ENCODE measurements at regions of chr5 and their contacts with region 1.

Region 1: DNA sequence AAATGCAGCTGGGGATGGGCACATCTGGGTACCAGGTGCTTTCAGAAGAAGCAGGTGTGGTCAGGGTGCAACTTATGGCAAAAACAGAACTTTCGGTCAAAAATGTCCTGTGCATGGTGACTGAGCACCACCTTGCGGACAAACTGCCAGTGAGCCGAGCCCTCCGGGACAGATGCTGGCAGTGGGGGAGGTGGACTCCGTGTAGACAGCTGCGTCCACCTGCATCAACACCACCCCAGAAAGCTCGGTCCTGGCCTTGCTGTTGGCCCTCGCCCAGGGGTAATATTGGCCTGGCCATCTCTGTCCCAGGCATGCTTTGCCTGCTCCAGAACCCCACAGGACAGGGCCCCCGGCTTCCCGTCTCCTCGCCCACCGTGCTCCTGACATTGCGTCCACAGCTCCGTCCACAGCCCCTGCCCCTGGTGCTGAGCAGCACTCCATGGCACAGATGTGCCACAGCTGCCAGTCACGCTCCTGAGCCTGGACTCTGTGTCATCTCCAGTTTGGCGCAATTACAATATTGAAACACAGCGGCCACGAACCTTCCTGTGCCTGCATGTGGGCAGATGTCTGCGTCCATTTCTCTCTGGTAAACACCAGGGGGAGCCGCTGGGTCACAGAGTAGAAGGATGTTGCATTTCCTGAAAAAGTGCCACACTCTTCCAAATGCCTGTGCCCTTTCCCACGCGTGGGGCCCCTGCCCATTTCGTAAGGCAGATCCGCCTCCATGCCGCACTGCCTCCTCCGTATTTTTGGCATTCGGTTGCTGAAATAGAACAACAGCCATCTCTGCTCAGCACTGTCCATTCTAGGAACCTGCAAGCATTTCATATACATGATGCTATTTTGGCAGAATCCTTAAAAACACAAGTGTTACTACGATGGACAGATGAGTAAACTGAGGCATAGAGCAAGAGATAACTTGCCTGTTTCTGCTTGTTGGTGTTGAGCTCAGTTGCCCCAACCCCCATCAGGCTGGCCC is 33.4 kb upstream of the SLC6A19 start:
- DNase-seq: peak; percentile 56
- H3K4me3 ChIP-seq: no peak overlapping the region
- H3K27ac ChIP-seq: no peak overlapping the region
- H3K4me1 ChIP-seq: no peaks in the 10 kb centered on the region
- H3K27me3 ChIP-seq: no peaks in the 10 kb centered on the region
- CTCF ChIP-seq: peak; percentile 66 to 80

Region 2: DNA sequence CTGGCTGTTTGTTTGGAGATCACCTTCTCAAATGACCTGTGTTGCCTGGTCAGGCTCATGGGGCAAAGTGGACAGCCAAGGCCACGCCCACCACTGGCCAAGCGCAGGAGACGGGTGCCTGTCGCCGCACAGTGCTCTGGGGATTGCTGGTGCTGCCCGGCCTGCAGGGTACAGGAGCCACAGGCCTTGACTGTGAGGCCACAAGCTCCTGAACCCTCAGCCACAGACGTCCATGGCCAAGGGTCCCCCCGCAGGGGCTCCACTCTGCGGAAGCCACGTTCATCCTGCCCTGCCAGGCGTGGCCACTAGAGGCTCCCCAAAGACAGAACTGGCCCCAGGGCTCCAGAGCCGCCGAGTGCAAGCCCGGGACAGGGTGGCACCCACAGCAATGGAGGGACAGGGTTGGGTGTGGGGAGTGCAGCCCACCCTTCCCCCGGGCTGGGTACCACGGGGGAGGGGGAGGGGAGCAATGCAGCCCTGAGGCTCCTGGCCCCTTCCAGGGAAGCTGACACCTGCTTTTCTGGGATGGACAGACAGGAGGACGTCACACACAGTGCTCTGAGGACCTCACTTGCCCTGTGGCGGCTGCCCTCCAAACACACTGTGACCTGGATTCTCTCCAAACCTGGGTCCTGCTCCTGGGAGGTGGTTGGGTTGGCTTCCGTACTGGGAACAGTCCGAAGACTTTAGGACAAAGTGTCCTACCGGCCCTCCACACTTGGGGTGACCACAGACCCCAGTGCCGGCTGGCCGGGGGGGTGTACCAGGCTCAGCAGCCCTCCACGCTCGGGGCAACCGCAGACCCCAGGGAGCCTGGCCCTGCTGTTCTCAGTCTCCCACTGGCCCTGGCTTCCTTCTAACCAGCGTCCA is 496.3 kb before region 1 on chr5:
- CTCF ChIA-PET with region 1: no interaction called
- dilution Hi-C with region 1: no loop called
- in situ Hi-C with region 1: no loop called
- intact Hi-C with region 1: loop called (anchors 5 kb)
- DNase-seq: peak; percentile 36
- H3K4me3 ChIP-seq: no peak overlapping the region
- H3K27ac ChIP-seq: peak overlapping the region; percentile 20
- H3K4me1 ChIP-seq: peaks cover 26% of the 10 kb centered on the region
- H3K27me3 ChIP-seq: peaks cover 4% of the 10 kb centered on the region
- CTCF ChIP-seq: peak; percentile 69 to 97

Region 3: GRCh38 chr5:873328-873727 is 294.7 kb before region 1 on chr5:
- CTCF ChIA-PET with region 1: no interaction called
- dilution Hi-C with region 1: no loop called
- in situ Hi-C with region 1: no loop called
- intact Hi-C with region 1: no loop called
- DNase-seq: no peak
- H3K4me3 ChIP-seq: no peak overlapping the region
- H3K27ac ChIP-seq: no peak overlapping the region
- H3K4me1 ChIP-seq: no peaks in the 10 kb centered on the region
- H3K27me3 ChIP-seq: no peaks in the 10 kb centered on the region
- CTCF ChIP-seq: no peak

Region 4: DNA sequence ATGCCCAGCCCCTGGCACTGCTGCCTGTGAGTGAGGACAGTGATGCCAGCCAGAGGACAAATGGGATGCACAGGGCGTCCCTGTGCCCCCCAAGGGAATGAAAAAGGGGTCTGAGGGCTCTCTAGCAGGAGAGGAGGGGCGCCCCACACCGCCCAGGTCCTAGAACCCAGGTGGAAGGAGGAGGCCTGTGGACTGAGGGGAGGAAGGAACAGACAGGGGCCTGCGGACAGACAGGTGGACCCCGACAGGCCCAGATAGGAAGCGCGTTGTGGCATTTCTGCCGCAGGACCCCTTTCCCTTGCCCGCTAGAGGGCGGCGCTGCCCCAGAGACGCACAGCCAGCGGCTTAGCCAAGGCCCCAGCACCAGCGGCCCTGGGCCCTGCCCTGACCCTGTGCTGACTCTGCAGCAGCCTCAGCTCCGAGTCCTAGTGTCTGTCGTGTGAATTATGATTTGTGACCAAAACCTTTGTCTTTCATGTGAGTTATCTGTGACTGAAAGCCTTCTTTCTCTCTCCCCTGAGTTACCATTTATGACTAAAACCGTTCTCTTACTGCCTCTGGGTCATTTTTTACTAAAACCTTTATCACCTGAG is 244.6 kb before region 1 on chr5:
- CTCF ChIA-PET with region 1: no interaction called
- dilution Hi-C with region 1: no loop called
- in situ Hi-C with region 1: loop called in 1 of 2 experiments (anchors 10 kb)
- intact Hi-C with region 1: loop called (anchors 2 kb)
- DNase-seq: peak; percentile 43
- H3K4me3 ChIP-seq: no peak overlapping the region
- H3K27ac ChIP-seq: no peak overlapping the region
- H3K4me1 ChIP-seq: no peaks in the 10 kb centered on the region
- H3K27me3 ChIP-seq: peaks cover 6% of the 10 kb centered on the region
- CTCF ChIP-seq: peak; percentile 75 to 93

Region 5: GRCh38 chr5:932628-933250 is 235.3 kb before region 1 on chr5:
- CTCF ChIA-PET with region 1: no interaction called
- dilution Hi-C with region 1: no loop called
- in situ Hi-C with region 1: loop called in 1 of 2 experiments (anchors 10 kb)
- intact Hi-C with region 1: no loop called
- DNase-seq: no peak
- H3K4me3 ChIP-seq: no peak overlapping the region
- H3K27ac ChIP-seq: no peak overlapping the region
- H3K4me1 ChIP-seq: no peaks in the 10 kb centered on the region
- H3K27me3 ChIP-seq: no peaks in the 10 kb centered on the region
- CTCF ChIP-seq: no peak

Region 6: GRCh38 chr5:989961-990530 is 178.0 kb before region 1 on chr5:
- CTCF ChIA-PET with region 1: no interaction called
- dilution Hi-C with region 1: no loop called
- in situ Hi-C with region 1: no loop called
- intact Hi-C with region 1: loop called (anchors 5 kb)
- DNase-seq: no peak
- H3K4me3 ChIP-seq: no peak overlapping the region
- H3K27ac ChIP-seq: no peak overlapping the region
- H3K4me1 ChIP-seq: no peaks in the 10 kb centered on the region
- H3K27me3 ChIP-seq: peaks cover 5% of the 10 kb centered on the region
- CTCF ChIP-seq: peak in 1 of 2 donors; percentile 30

Region 7: DNA sequence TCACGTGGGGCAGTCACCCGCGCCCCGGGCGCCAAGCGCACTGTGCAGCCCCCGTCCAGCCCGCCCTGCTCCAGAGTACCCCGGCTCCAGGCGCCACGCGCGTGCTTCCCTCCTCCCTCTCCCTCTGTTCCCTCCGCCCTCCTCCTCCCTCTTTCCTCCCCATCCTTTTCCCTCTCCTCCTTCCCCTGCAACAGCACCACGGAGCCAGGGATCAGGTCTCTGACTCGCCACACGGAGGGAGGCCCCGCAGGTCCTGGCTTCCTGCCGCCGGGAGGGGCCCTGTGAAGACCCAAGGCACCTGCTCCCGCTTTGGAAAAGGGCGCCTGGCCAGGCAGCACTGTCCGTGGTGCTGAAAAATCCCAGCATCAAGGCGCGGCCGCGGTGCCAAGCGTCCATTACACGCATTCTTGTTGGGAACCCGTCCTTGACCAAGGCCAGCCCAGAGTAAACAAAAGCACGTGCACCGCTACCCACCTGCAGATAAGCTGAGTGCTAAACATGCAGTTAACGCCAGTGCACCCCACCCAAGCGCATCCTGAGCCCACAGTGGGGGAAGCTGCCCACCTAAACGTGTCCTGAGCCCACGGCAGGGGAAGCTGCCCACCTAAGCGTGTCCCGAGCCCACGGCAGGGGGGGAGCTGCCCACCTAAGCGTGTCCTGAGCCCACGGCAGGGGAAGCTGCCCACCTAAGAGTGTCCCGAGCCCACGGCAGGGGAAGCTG is 78.9 kb after region 1 on chr5:
- CTCF ChIA-PET with region 1: no interaction called
- dilution Hi-C with region 1: no loop called
- in situ Hi-C with region 1: no loop called
- intact Hi-C with region 1: no loop called
- DNase-seq: peak; percentile 24
- H3K4me3 ChIP-seq: no peak overlapping the region
- H3K27ac ChIP-seq: no peak overlapping the region
- H3K4me1 ChIP-seq: no peaks in the 10 kb centered on the region
- H3K27me3 ChIP-seq: no peaks in the 10 kb centered on the region
- CTCF ChIP-seq: no peak

Region 8: GRCh38 chr5:1344975-1345838 is 177.2 kb after region 1 on chr5 and contains the start of gene CLPTM1L:
- CTCF ChIA-PET with region 1: no interaction called
- dilution Hi-C with region 1: no loop called
- in situ Hi-C with region 1: no loop called
- intact Hi-C with region 1: loop called (anchors 2 kb)
- DNase-seq: peak; percentile 81
- H3K4me3 ChIP-seq: peak within 1 kb of the TSS; percentile 80 to 91 (median 87)
- H3K27ac ChIP-seq: peak within 1 kb of the TSS; percentile 78
- H3K4me1 ChIP-seq: peaks cover 18% of the 10 kb centered on the region
- H3K27me3 ChIP-seq: no peaks in the 10 kb centered on the region
- CTCF ChIP-seq: no peak
- total RNA-seq, gene CLPTM1L: 111 to 154 TPM

Region 9: GRCh38 chr5:1523771-1524480 is 355.9 kb after region 1 on chr5 and contains the start of gene LPCAT1:
- CTCF ChIA-PET with region 1: no interaction called
- dilution Hi-C with region 1: no loop called
- in situ Hi-C with region 1: no loop called
- intact Hi-C with region 1: loop called (anchors 5 kb)
- DNase-seq: peak; percentile 60
- H3K4me3 ChIP-seq: peak within 1 kb of the TSS; percentile 54 to 84 (median 66)
- H3K27ac ChIP-seq: peak within 1 kb of the TSS; percentile 44
- H3K4me1 ChIP-seq: peaks cover 16% of the 10 kb centered on the region
- H3K27me3 ChIP-seq: no peaks in the 10 kb centered on the region
- CTCF ChIP-seq: peak in 1 of 2 donors; percentile 6
- total RNA-seq, gene LPCAT1: 37.1 to 43.5 TPM

Measured in mammary epithelial cell (primary cell).